ENCODE measurements at regions of chr12 and their contacts with region 1.

Region 1: GRCh38 chr12:31659087-31659933 is at the start of gene ETFBKMT:
- DNase-seq: peak; percentile 92
- total RNA-seq, gene ETFBKMT: 3.6 and 3.9 TPM in 2 replicates

Region 2: DNA sequence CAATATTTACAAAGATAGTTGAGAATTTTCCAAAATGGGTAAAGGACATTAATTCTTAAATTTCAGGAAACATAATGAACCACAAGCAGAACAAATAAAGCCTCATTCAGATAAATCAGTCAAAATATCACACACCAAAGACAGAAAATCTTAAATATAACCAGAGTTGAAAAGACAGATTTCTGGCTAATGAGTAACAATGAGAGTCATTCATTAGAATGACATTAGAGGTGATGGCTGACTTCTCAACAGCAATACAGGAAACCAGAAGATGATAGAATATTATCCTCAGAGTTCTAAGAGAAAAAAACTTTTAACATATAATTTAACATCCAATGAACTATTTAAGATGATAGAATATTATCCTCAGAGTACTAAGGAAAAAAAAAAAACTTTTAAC is 192.5 kb before region 1 on chr12:
- in situ Hi-C with region 1: no loop called
- DNase-seq: peak; percentile 18

Region 3: DNA sequence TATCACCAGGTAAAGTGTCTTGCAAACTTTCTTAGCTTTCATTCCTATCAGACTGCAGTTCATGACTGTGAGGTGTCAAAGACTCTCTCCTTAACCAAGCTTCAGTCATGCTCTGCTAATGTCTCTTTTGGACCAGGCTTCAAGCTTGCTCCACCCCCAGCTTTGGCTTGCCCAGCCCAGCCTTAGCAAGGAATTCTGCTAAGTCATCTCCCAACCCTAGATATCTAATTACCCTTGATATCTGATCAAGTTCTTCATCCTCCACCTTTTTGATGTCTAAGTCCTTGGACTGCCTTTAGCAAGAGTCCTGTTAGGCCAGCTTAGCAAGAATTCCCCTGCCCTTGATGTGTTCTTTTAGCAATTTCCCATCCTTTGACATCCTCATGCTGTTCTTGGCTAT is 631.1 kb after region 1 on chr12:
- in situ Hi-C with region 1: loop called (anchors 25 kb)
- DNase-seq: no peak